Posterior cingulate gyrus (tissue), 11 donors: ENCODE measurements at regions of chr14 and their contacts with region 1.

Region 1: GRCh38 chr14:85856430-85856829 is 326.5 kb downstream of the FLRT2 start:
- DNase-seq: no peak

Region 2: GRCh38 chr14:85978582-85979250 is 122.3 kb after region 1 on chr14:
- intact Hi-C with region 1: loop called (anchors 5 kb)
- DNase-seq: no peak

Region 3: DNA sequence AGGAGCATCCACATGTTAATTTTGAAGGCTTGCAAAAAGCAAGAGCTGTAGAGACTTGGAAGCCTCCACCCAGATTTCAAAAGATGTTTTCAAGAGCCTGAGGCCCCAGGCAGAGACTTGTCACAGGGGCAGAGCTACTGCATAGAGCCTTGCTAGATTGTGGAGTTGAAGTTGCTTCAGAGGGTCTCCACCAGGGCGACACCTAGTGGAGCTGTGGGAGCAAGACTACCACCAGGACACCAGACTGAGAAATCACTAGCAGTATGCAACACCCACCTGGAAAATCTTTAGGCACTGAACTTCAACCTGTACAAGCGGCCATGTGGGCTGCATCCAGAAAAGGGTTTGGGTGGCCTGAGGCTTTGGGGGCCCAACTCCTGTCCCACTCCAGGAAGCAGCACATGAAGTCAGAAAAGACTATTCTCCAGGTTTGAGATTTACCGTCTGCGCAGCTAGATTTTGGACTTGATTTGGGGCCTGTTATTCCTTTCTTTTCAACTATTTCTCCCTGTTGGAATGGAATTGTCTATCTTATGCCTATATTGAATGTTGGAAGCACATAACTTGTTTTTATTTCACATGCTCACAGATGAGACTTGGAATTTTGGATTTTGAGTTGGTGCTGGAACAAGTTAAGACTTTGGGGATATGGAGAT is 182.1 kb after region 1 on chr14:
- intact Hi-C with region 1: loop called (anchors 5 kb)
- DNase-seq: peak in 6 of 10 donors; percentile 7 to 88 (median 37)

Region 4: DNA sequence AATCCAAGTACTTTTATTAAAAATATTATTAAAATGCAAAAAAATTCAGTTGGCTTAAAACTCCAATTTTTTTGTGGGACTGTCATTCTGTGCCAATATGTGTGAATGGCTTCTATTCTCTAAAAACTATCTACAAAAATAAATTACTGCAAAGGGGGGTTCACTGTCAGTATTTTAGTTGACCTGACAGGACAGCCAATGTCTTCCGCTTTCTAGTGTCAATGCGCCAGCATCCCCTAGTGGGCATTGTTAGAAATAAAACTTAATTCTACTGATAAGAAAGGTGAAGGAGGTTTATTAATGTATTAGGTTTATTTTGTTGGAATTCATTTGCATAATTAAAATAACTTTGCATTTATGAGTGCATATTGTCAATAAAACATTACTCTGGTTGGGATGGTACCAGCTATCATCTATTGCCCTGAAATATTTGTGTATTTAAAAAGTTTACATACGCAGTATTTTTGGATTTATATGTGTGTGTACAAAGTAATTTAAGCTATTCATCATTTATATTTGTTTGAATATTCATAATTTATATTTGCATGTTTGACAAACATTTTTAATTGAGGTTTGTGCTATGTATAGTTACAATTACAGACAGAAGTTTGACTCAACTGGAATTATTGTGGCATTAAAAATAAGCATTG is 200.7 kb after region 1 on chr14:
- intact Hi-C with region 1: loop called (anchors 5 kb)
- DNase-seq: peak in 5 of 10 donors; percentile 13 to 85 (median 26)